ENCODE measurements at regions of chr2 and their contacts with region 1.

Region 1: GRCh38 chr2:119283860-119284331 is 60.3 kb downstream of the STEAP3 start:
- DNase-seq: peak; percentile 80
- ATAC-seq: peak; percentile 76
- H3K4me3 ChIP-seq: no peak overlapping the region
- H3K27ac ChIP-seq: no peak overlapping the region
- H3K4me1 ChIP-seq: peaks cover 2% of the 10 kb centered on the region; the same call in 1 of the 2 replicates
- H3K27me3 ChIP-seq: peaks cover 4% of the 10 kb centered on the region; the same call in 1 of the 2 replicates
- CTCF ChIP-seq: no peak
- POLR2A ChIP-seq: no peak
- RAD21 ChIP-seq: no peak

Region 2: DNA sequence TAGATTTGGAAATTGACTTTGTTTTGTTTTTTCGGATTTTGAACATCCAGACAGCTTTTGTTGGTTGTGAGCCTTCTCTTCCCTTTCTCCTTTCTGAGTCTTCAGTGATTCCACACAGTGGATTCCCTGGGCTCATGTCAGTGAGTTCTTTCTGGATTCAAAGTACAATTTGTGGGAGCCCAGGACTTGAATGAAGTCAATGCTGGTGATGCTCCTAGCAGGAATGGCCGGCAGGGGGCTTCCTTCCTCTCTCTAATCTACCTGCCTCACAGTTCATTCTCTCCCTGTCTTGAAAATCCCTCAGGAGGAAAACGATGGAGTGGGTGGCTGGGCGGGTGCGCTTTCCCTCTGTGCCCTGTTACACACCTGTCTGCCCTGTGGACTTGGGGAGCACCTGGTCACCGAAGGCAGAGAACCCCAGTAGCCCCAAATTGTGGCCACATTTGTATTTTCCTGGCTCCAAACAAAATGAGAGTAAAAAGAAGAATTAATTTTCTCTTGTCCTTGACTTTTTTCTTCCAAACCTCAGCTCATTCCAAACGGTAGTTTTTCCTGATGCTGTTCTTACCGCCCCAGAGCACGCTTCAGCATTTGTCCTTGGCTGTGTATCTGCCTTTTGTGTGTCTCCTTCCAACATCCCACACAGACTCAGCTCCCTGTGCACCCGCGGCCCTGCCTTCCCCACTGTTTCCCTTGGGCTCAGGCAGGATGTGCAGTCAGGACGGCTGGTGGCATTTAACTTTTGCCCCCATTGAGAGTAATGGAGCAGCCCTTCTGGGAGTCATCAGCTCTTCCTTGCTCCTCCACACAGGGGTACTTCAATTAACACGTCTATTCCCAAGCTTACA is 255.3 kb before region 1 on chr2:
- CTCF ChIA-PET with region 1: no interaction called
- POLR2A ChIA-PET with region 1: no interaction called
- dilution Hi-C with region 1: no loop called
- in situ Hi-C with region 1: loop called (anchors 10 kb)
- intact Hi-C with region 1: no loop called
- DNase-seq: peak; percentile 25
- ATAC-seq: peak; percentile 44; the same call in 1 of the 2 replicates
- H3K4me3 ChIP-seq: no peak overlapping the region
- H3K27ac ChIP-seq: no peak overlapping the region
- H3K4me1 ChIP-seq: no peaks in the 10 kb centered on the region
- H3K27me3 ChIP-seq: no peaks in the 10 kb centered on the region
- CTCF ChIP-seq: peak; percentile 58
- POLR2A ChIP-seq: no peak
- RAD21 ChIP-seq: peak; percentile 57

Measured in IMR-90 (cell line).